CD4-positive, alpha-beta memory T cell (primary cell): ENCODE measurements at regions of chr22 and their contacts with region 1.

Region 1: GRCh38 chr22:40898850-40899357 is 37.0 kb upstream of the DNAJB7 start:
- DNase-seq: peak; percentile 41 to 54 (median 45)
- H3K4me3 ChIP-seq: no peak overlapping the region
- H3K4me3 Mint-ChIP-seq: peak overlapping the region in 2 of 8 donors; percentile 21 to 26
- H3K27ac ChIP-seq: no peak overlapping the region
- H3K27ac Mint-ChIP-seq: peak overlapping the region in 4 of 7 donors; percentile 1 to 67 (median 30)
- H3K4me1 ChIP-seq: peaks cover 4% of the 10 kb centered on the region
- H3K4me1 Mint-ChIP-seq: peaks cover 4 to 8% (median 7%) of the 10 kb centered on the region in 4 donors
- H3K27me3 ChIP-seq: no peaks in the 10 kb centered on the region
- H3K27me3 Mint-ChIP-seq: no peaks in the 10 kb centered on the region

Region 2: DNA sequence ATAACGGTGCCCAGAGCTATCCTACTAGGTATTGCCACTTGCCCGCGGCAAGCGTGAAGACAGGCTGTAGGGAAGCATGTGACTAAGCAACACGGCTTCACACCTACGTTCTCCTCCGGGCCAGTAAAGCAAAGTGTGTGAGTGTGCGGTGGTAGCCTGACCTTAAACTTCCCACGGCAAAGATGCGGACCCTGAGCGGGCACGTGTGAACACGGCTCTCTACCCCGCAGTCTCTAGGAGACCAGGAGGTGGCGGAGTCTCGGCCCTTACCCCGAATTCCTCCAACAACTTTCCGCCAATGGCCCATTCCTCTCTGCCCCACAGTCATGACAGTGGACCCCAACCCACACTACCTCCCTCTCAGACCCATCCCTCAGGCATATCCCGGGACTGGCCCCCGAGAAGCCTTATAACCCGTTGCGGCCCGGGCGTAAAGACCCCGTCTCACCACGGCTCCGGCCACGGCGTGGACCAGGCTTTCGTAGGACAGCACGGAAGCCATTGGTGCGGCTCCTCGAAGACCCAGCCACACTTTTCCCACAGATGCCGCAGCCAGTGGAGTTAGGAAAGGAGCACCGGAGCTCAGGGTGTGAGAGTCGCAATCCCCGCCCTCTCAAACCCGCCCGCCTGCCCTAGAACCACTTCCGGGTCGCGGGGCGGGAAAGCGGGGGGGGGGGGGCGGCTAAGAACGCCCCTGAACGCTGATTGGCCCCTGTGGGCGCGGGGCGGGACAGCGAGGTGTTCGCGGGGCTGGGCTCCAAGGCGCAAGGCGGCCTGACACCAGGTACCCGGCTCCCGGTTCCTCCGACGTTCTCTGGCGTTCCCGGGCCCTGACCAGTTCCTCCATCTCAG is 79.9 kb before region 1 on chr22 and contains the start of gene SLC25A17:
- CTCF ChIA-PET with region 1: interaction called, 5 read pairs
- POLR2A ChIA-PET with region 1: no interaction called
- intact Hi-C with region 1: loop called (anchors 5 kb)
- DNase-seq: peak; percentile 81 to 84 (median 82)
- H3K4me3 ChIP-seq: peak within 1 kb of the TSS; percentile 92 to 95
- H3K4me3 Mint-ChIP-seq: peak within 1 kb of the TSS; percentile 92 to 99 (median 97)
- H3K27ac ChIP-seq: peak within 1 kb of the TSS; percentile 81
- H3K27ac Mint-ChIP-seq: peak within 1 kb of the TSS; percentile 82 to 98 (median 95)
- H3K4me1 ChIP-seq: peaks cover 27% of the 10 kb centered on the region
- H3K4me1 Mint-ChIP-seq: peaks cover 29 to 46% (median 36%) of the 10 kb centered on the region in 4 donors
- H3K27me3 ChIP-seq: no peaks in the 10 kb centered on the region
- H3K27me3 Mint-ChIP-seq: no peaks in the 10 kb centered on the region
- total RNA-seq, gene SLC25A17: 15.4 to 15.6 TPM

Region 3: GRCh38 chr22:40928657-40929056 is 29.8 kb after region 1 on chr22:
- CTCF ChIA-PET with region 1: no interaction called
- POLR2A ChIA-PET with region 1: no interaction called
- intact Hi-C with region 1: no loop called
- DNase-seq: no peak
- H3K4me3 ChIP-seq: no peak overlapping the region
- H3K4me3 Mint-ChIP-seq: no peak overlapping the region
- H3K27ac ChIP-seq: no peak overlapping the region
- H3K27ac Mint-ChIP-seq: no peak overlapping the region
- H3K4me1 ChIP-seq: no peaks in the 10 kb centered on the region
- H3K4me1 Mint-ChIP-seq: peaks cover 0 to 1% (median 0%) of the 10 kb centered on the region in 4 donors
- H3K27me3 ChIP-seq: no peaks in the 10 kb centered on the region
- H3K27me3 Mint-ChIP-seq: no peaks in the 10 kb centered on the region